ENCODE measurements at regions of chr2 and their contacts with region 1.

Region 1: GRCh38 chr2:27095745-27096651 is 9.4 kb downstream of the KHK start:
- DNase-seq: peak in 3 of 4 donors; percentile 62 to 83 (median 71)
- ATAC-seq: peak; percentile 93
- H3K4me3 ChIP-seq: peak overlapping the region; percentile 12 to 30
- H3K27ac ChIP-seq: peak overlapping the region in 1 of 2 donors; percentile 46
- H3K4me1 ChIP-seq: peaks cover 6 to 17% of the 10 kb centered on the region in 2 donors
- H3K27me3 ChIP-seq: no peaks in the 10 kb centered on the region
- CTCF ChIP-seq: no peak

Region 2: DNA sequence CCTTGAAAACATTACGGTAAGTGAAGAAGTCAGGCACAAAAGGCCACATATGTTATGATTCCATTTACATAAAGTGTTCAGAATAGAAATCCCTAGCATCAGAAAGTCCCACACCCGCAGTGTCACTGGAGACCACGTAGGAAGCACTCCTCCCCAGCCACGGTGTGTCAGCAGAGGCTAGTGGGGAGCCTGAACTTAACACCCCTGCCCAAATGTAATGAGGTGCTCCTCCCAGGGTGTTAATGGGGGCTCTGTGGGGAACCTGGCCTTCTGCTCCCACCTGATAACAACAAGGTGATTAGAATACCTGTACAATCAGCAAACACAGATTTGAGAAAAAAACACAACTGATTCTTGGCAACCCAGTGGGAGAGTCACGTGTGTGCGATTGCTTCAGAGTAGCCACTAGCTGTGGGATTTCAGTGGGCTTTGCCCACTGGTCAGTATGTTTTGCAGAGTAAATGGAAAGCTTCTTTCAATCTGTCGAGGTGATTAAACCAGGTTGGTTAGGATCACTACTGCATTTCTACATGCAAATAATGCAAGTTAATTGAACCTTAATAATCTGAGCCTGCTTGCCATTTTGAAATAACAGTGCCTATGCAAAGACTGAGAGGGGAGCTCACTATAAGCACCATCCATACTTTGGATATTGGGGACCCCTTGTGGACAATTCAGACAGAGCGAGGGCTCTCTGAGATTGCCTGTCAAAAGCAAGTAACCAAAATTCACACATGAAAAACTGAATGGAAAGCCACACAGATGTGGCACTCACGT is 95.2 kb after region 1 on chr2:
- intact Hi-C with region 1: no loop called
- DNase-seq: peak in 2 of 4 donors; percentile 46 to 72
- ATAC-seq: peak; percentile 86
- H3K4me3 ChIP-seq: no peak overlapping the region
- H3K27ac ChIP-seq: no peak overlapping the region
- H3K4me1 ChIP-seq: no peaks in the 10 kb centered on the region
- H3K27me3 ChIP-seq: no peaks in the 10 kb centered on the region
- CTCF ChIP-seq: peak; percentile 57 to 59

Region 3: GRCh38 chr2:27209621-27210401 is 113.8 kb after region 1 on chr2:
- intact Hi-C with region 1: loop called in 1 of 2 experiments (anchors 10 kb)
- DNase-seq: peak in 1 of 4 donors; percentile 8
- ATAC-seq: no peak
- H3K4me3 ChIP-seq: no peak overlapping the region
- H3K27ac ChIP-seq: no peak overlapping the region
- H3K4me1 ChIP-seq: peaks cover 0 to 21% of the 10 kb centered on the region in 2 donors
- H3K27me3 ChIP-seq: no peaks in the 10 kb centered on the region
- CTCF ChIP-seq: no peak

Region 4: DNA sequence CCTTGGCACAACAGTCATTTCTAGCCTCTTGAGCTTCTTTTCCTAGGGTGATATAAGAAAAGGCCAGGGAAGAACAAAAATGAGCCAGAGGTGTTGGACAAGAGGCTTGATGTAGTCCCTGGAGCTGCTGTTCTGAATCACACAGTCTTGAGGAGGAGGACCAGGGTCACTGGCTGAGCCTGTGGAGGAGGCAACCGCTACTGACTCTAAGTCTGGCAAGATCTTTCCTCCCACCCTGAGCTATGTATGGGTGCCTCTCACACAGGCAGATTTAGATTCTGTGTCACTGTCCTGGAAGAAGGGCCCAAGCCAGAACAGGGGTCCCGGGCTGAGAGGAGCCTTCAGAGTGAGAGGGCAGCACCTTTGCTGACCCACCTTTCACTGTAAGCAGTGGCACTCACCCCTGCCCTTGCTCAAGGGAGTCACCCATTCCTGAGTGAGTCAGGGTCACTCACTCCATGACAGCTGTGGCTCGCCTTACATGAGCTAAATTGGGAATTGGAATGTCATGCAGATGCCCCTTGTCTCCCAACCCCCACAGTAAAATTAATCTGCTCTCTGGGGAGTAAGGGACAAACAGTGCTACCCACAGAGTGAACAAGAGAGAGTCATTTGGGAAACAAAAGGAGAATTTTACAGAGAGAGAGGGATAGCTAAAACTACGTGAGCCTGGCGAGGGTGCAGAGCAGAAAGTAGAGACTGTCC is 186.0 kb after region 1 on chr2 and contains the start of gene TRIM54:
- intact Hi-C with region 1: loop called in 1 of 2 experiments (anchors 10 kb)
- DNase-seq: no peak
- ATAC-seq: no peak
- H3K4me3 ChIP-seq: no peak within 1 kb of the TSS
- H3K27ac ChIP-seq: no peak within 1 kb of the TSS
- H3K4me1 ChIP-seq: peaks cover 0 to 4% of the 10 kb centered on the region in 2 donors
- H3K27me3 ChIP-seq: peaks cover 0 to 29% of the 10 kb centered on the region in 2 donors
- CTCF ChIP-seq: no peak
- polyA plus RNA-seq, gene TRIM54: 0.07 to 0.14 (median 0.09) TPM in 5 of 6 donors, not detected in the other

Region 5: DNA sequence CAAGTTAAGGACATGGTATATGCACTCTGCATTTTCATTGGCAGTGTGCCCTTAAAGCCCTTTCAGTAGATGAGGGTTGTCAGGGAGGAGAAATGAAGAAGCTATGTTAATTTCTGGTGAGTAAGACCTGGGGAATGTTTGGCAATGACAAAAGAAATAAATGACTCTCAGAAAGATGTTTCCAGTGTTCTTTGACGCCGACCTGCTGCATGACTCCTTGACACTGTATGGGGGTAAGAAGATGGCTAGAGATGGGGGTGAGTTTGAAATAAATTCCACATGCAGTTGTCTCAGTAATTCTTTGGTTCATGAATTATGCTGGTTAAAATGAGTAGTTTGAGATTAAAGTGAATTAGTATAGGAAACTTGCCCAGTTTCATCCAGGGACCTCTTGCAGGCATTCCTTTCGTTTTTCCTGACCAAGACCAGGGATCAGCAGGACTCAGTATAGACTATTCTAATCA is 527.0 kb after region 1 on chr2:
- intact Hi-C with region 1: no loop called
- DNase-seq: no peak
- ATAC-seq: no peak
- H3K4me3 ChIP-seq: no peak overlapping the region
- H3K27ac ChIP-seq: no peak overlapping the region
- H3K4me1 ChIP-seq: peaks cover 0 to 23% of the 10 kb centered on the region in 2 donors
- H3K27me3 ChIP-seq: no peaks in the 10 kb centered on the region
- CTCF ChIP-seq: no peak

Measured in left lung (tissue), 14 donors.